BJ (cell line): ENCODE measurements at regions of chr7 and their contacts with region 1.

Region 1: DNA sequence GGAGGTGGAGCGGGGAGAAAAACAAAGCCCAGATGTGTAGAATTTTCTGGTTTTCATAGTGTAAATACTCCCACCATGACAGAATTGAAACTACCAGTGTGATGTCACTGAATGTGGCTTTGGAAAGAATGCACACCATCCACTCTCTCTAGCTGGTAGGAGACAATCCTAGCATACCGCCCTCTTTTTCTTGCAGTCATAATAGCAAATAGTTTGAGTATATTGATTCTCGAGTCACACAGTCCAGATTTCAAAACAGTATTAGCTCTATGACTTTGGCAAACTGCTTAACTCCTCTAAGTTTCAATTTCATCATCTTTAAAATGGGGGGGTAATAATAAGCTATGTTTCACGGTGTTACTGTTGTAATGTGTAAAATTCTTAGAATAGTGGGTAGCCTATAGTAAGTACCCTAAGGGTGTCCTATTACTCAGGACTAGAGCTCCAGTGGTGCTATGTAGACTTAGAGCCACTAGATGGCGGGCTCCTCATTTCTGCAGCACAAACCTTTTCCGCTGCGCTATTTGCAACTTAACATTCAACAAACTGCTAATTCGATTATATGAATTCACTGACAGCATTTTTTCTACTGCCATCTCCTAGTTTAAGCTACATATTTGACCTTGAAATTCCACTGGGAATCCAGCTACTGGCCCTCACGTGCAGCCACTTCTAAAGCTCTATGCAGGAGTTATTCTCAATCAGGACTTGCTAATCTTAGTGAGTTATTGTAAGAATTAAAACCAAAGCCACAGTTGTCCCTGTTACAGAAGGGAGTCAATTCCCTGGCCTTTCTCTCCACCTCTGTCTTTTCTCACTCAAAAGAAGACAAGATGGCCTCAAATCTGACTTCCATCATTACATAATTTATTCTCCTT is 18.7 kb downstream of the TAS2R40 start:
- DNase-seq: peak; percentile 78
- H3K4me3 ChIP-seq: no peak overlapping the region
- H3K27me3 ChIP-seq: peaks cover 6% of the 10 kb centered on the region
- CTCF ChIP-seq: peak; percentile 88

Region 2: DNA sequence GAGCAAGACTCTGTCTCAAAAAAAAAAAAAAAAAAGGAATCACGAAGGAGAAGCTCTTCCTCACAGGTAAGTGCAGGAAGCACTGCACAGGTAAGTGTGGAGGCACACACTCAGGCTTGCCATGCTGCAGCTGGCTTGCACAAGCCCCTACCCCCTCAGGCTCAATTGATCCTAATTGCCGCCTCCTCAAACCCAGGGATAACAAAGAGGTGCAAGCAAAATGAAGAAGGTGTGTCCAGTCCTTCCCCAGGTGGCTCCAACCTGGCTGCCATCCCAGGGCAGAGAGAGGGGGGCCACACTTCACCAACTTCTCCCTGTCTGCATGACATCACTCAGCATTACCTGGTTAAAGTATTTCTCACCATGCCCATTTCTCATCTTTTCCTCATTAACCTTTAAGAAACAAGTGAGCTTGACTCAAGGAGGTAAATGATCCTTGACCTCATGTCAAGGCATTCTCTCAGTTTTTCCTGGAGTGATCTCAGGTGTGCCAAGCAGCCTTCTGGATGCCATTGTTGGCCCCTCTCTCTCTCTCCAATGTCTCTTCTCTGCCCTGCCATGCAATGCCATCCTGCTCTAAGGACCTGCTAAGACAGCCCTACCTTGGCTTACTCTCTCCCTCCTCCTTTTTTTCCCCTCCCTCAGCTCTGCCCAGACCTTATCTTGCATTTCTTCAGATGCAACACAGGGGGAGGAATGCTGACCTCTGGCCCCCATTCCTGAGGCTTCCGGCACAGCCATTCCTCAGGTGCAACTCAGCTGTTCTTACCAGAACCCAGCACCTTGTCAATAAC is 342.0 kb before region 1 on chr7:
- CTCF ChIA-PET with region 1: no interaction called
- POLR2A ChIA-PET with region 1: no interaction called
- DNase-seq: no peak
- H3K4me3 ChIP-seq: no peak overlapping the region
- H3K27me3 ChIP-seq: no peaks in the 10 kb centered on the region
- CTCF ChIP-seq: no peak

Region 3: DNA sequence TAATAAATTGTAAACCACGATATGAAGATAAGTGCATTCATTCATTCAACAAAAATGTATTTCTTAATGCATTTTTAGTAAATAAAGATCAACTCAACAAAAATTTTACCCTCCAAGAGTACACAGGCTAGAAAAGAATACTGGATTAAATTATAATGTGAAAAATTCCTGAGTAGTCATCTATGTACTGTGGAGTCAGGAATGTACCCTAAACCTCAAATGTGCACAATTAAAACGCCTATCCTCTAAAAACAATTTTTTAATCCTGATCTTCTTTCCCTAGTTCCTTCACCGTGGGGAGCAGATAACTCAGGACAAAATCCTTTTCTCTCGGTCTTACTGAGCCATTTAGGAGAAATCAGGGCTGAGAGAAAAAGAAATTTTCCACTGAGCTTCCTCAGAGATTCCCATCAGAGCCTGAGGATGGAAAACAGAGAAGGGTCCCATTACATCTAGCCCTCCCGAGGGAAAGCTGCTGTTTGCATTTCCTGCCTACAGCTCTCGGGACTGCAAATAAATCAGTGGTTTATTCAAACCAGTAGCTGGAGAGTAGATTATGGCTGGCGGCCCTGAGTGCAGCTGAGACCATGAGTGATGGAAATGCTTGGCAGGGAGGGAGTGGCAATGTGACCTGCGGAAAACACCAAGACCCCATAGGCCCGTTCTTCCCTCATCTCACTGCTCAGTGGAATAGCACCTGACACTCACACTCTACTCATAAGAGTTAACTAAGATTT is 11.3 kb before region 1 on chr7:
- CTCF ChIA-PET with region 1: interaction called, 13 read pairs
- POLR2A ChIA-PET with region 1: no interaction called
- DNase-seq: no peak
- H3K4me3 ChIP-seq: no peak overlapping the region
- H3K27me3 ChIP-seq: no peaks in the 10 kb centered on the region
- CTCF ChIP-seq: no peak

Region 4: GRCh38 chr7:143263266-143264195 is 23.0 kb after region 1 on chr7 and contains the start of gene GSTK1:
- CTCF ChIA-PET with region 1: interaction called, 12 read pairs
- POLR2A ChIA-PET with region 1: no interaction called
- DNase-seq: no peak
- H3K4me3 ChIP-seq: peak within 1 kb of the TSS; percentile 61
- H3K27me3 ChIP-seq: no peaks in the 10 kb centered on the region
- CTCF ChIP-seq: no peak
- polyA plus RNA-seq, gene GSTK1: 132 and 164 TPM in 2 replicates

Region 5: DNA sequence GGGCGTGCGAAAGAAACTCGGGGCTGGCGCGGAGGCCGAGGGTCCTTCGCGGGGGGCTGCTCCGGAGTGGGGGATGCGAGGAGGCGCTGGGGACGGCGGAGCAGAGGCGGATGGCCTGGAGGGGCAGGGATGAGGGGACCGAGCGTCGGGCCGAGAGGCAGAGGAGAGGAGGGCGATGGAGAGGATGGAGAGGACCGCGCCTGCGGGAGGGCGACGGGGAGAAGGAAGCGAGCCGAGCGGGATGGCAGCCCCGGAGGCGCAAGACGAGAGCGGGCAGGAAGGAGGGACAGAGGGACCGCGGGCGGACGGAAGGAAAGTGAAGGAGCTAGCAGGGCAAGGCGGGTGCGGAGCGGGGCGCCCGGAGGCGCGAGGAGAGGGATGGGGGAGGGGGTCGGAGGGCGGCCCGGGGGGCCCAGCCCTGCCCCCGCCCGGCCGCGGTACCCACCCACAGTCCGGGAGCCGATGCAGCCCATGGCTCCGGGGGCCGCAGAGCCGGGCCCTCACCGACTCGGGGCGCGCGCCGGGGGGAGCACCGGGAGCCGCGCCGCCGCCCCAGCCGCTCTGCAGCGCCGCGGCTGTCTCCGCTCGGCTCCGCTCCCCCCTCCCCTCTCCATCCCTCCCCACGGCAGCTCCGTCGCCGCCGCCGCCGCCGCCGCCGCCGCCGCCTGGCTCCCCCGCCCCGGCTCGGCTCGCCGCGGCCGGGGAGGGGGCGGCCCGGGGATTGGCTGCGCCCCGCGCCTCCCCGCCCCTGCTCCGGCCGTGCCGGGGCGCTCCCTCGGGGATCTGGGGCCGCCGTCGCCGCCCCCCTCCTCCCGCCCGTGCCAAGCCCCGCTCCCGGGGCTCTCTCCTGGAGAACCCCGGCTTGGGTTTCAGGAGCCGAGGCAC is 121.8 kb after region 1 on chr7 and contains the start of gene FAM131B:
- CTCF ChIA-PET with region 1: no interaction called
- POLR2A ChIA-PET with region 1: no interaction called
- DNase-seq: no peak
- H3K4me3 ChIP-seq: peak within 1 kb of the TSS; percentile 54
- H3K27me3 ChIP-seq: peaks cover 24% of the 10 kb centered on the region
- CTCF ChIP-seq: no peak
- polyA plus RNA-seq, gene FAM131B: 2.0 and 2.9 TPM in 2 replicates

Region 6: GRCh38 chr7:143380255-143380645 is 139.7 kb after region 1 on chr7:
- CTCF ChIA-PET with region 1: interaction called, 22 read pairs
- POLR2A ChIA-PET with region 1: no interaction called
- DNase-seq: peak; percentile 40
- H3K4me3 ChIP-seq: peak overlapping the region; percentile 85
- H3K27me3 ChIP-seq: no peaks in the 10 kb centered on the region
- CTCF ChIP-seq: peak; percentile 93

Region 7: GRCh38 chr7:144086730-144087129 is 846.2 kb after region 1 on chr7:
- CTCF ChIA-PET with region 1: no interaction called
- POLR2A ChIA-PET with region 1: interaction called, 19 read pairs
- DNase-seq: no peak
- H3K4me3 ChIP-seq: no peak overlapping the region
- H3K27me3 ChIP-seq: no peaks in the 10 kb centered on the region
- CTCF ChIP-seq: no peak